CD4-positive, alpha-beta T cell (primary cell): ENCODE measurements at regions of chr1 and their contacts with region 1.

Region 1: DNA sequence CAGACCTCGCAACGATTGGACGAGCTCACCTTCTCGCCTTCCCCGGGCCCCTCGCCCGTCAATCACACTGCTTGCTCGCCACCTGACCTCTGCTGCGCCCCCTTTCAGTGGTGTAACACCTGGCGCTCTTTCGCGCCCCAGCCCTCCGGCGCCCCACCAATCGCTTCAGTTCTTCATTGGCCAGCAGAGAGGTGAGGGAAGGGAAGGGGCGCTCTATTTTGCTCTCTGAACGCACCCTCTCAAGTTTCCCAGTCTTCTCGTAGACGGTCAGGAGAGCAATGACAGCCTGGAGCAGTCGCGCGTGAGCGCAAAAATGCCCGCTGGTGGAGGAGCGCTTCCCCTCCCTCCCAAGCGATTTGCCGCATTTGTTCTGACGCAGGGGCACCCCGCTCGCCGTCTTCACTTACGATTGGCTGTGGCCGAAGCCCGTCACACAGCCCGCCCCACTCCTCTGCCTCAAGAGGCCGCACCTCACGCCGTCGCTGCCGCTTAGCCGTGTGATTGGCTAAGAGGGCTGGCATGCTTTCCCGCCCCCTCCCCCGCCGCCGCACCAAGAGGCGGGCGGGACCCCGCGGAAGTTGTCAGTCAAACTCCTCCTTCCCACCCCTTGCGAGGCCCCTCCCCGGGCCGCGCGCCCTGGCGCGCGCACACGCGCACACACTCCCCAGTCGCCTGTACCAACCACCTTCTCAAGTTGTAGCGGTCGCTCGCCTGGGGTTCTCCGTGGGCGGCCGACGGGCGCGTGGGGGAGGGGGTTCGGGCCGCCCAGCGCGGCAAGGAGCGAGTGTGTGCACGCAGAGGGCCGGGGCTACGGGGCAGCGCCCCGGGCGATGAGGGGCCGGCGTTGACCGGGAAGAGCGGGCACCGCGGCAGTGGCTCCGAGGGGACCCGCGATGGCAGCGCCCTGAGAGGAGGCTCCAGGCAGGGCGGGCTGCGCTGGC is at the start of gene PPP2R5A:
- DNase-seq: peak; percentile 96 to 100 (median 98)
- ATAC-seq: peak; percentile 86
- H3K4me3 ChIP-seq: peak within 1 kb of the TSS; percentile 99
- H3K4me3 Mint-ChIP-seq: peak within 1 kb of the TSS; percentile 100
- H3K27ac ChIP-seq: peak within 1 kb of the TSS; percentile 90 to 98
- H3K27ac Mint-ChIP-seq: peak within 1 kb of the TSS; percentile 92
- H3K4me1 ChIP-seq: peaks cover 22% of the 10 kb centered on the region
- H3K4me1 Mint-ChIP-seq: peaks cover 37% of the 10 kb centered on the region
- H3K27me3 ChIP-seq: no peaks in the 10 kb centered on the region
- H3K27me3 Mint-ChIP-seq: peaks cover 4% of the 10 kb centered on the region
- CTCF ChIP-seq: peak; percentile 50
- total RNA-seq, gene PPP2R5A: 44.3 to 46.2 TPM

Region 2: DNA sequence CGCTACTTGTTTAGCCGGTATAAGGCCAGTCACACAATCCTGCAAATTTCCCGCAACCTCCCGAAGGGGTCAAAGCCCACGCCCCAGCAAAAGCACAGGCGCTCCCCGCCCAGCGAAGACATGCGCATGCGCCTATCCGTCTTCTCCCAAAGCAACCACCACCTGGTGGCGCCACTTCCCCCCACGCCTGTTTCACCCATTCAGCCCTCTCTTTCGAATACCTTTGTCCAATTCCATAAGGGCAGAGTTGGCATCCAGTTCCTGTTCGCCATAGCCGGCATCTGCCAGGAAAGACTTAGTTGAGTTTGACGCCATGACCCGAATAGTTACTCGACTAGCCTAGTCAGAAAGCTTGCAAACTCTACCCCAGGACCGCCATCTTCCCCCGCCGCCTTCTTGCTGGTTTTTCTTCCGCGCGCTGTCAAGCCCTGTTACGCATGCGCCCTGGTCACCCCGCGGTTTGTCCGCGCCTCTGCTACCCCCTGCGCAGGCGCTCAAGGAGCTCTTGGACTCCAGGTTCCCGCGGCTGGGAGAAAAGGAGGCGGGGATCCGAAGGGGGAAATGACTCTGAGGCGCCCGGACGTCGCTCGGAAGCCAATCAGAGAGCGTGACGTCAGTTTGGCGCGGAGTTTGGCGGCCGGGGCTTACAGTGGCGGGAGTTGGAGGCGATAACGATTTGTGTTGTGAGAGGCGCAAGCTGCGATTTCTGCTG is 249.7 kb before region 1 on chr1 and contains the starts of genes DTL and INTS7:
- CTCF ChIA-PET with region 1: interaction called, 7 read pairs
- POLR2A ChIA-PET with region 1: interaction called, 50 read pairs
- intact Hi-C with region 1: loop called (anchors 1 to 5 kb)
- DNase-seq: peak; percentile 94 to 100 (median 98)
- ATAC-seq: peak; percentile 88
- H3K4me3 ChIP-seq: peak within 1 kb of the TSS; percentile 83
- H3K4me3 Mint-ChIP-seq: peak within 1 kb of the TSS; percentile 95
- H3K27ac ChIP-seq: peak within 1 kb of the TSS; percentile 55 to 77
- H3K27ac Mint-ChIP-seq: peak within 1 kb of the TSS; percentile 95
- H3K4me1 ChIP-seq: peaks cover 16% of the 10 kb centered on the region
- H3K4me1 Mint-ChIP-seq: peaks cover 66% of the 10 kb centered on the region
- H3K27me3 ChIP-seq: no peaks in the 10 kb centered on the region
- H3K27me3 Mint-ChIP-seq: no peaks in the 10 kb centered on the region
- CTCF ChIP-seq: peak; percentile 99
- total RNA-seq, gene DTL: 0.49 to 0.64 TPM
- total RNA-seq, gene INTS7: 2.9 to 3.2 TPM

Region 3: GRCh38 chr1:212162635-212163034 is 122.4 kb before region 1 on chr1:
- CTCF ChIA-PET with region 1: no interaction called
- POLR2A ChIA-PET with region 1: no interaction called
- intact Hi-C with region 1: loop called in 1 of 2 experiments (anchors 10 kb)
- DNase-seq: peak in 7 of 14 experiments; percentile 7 to 39 (median 35)
- ATAC-seq: no peak
- H3K4me3 ChIP-seq: no peak overlapping the region
- H3K4me3 Mint-ChIP-seq: peak overlapping the region; percentile 2
- H3K27ac ChIP-seq: no peak overlapping the region
- H3K27ac Mint-ChIP-seq: no peak overlapping the region
- H3K4me1 ChIP-seq: peaks cover 35% of the 10 kb centered on the region
- H3K4me1 Mint-ChIP-seq: peaks cover 27% of the 10 kb centered on the region
- H3K27me3 ChIP-seq: no peaks in the 10 kb centered on the region
- H3K27me3 Mint-ChIP-seq: no peaks in the 10 kb centered on the region
- CTCF ChIP-seq: no peak

Region 4: GRCh38 chr1:212328248-212328647 is 43.2 kb after region 1 on chr1:
- CTCF ChIA-PET with region 1: no interaction called
- POLR2A ChIA-PET with region 1: no interaction called
- intact Hi-C with region 1: loop called (anchors 5 kb)
- DNase-seq: no peak
- ATAC-seq: no peak
- H3K4me3 ChIP-seq: no peak overlapping the region
- H3K4me3 Mint-ChIP-seq: no peak overlapping the region
- H3K27ac ChIP-seq: no peak overlapping the region
- H3K27ac Mint-ChIP-seq: no peak overlapping the region
- H3K4me1 ChIP-seq: peaks cover 5% of the 10 kb centered on the region
- H3K4me1 Mint-ChIP-seq: peaks cover 54% of the 10 kb centered on the region
- H3K27me3 ChIP-seq: no peaks in the 10 kb centered on the region
- H3K27me3 Mint-ChIP-seq: no peaks in the 10 kb centered on the region
- CTCF ChIP-seq: no peak

Region 5: GRCh38 chr1:212432706-212433576 is 147.9 kb after region 1 on chr1 and contains the start of gene NENF:
- CTCF ChIA-PET with region 1: no interaction called
- POLR2A ChIA-PET with region 1: interaction called, 6 read pairs
- intact Hi-C with region 1: loop called in 1 of 2 experiments (anchors 5 kb)
- DNase-seq: peak; percentile 39 to 86 (median 70)
- ATAC-seq: peak; percentile 99
- H3K4me3 ChIP-seq: peak within 1 kb of the TSS; percentile 69
- H3K4me3 Mint-ChIP-seq: peak within 1 kb of the TSS; percentile 87
- H3K27ac ChIP-seq: no peak within 1 kb of the TSS
- H3K27ac Mint-ChIP-seq: peak within 1 kb of the TSS; percentile 65
- H3K4me1 ChIP-seq: peaks cover 20% of the 10 kb centered on the region
- H3K4me1 Mint-ChIP-seq: peaks cover 24% of the 10 kb centered on the region
- H3K27me3 ChIP-seq: no peaks in the 10 kb centered on the region
- H3K27me3 Mint-ChIP-seq: no peaks in the 10 kb centered on the region
- CTCF ChIP-seq: no peak
- total RNA-seq, gene NENF: 21.2 to 22.4 TPM

Region 6: GRCh38 chr1:212608209-212608955 is 323.4 kb after region 1 on chr1 and contains the start of gene ATF3:
- CTCF ChIA-PET with region 1: no interaction called
- POLR2A ChIA-PET with region 1: no interaction called
- intact Hi-C with region 1: loop called in 1 of 2 experiments (anchors 5 kb)
- DNase-seq: peak; percentile 49 to 92 (median 69)
- ATAC-seq: peak; percentile 69
- H3K4me3 ChIP-seq: peak within 1 kb of the TSS; percentile 82
- H3K4me3 Mint-ChIP-seq: peak within 1 kb of the TSS; percentile 97
- H3K27ac ChIP-seq: no peak within 1 kb of the TSS
- H3K27ac Mint-ChIP-seq: peak within 1 kb of the TSS; percentile 78
- H3K4me1 ChIP-seq: peaks cover 38% of the 10 kb centered on the region
- H3K4me1 Mint-ChIP-seq: peaks cover 36% of the 10 kb centered on the region
- H3K27me3 ChIP-seq: peaks cover 59% of the 10 kb centered on the region in 2 experiments
- H3K27me3 Mint-ChIP-seq: peaks cover 86% of the 10 kb centered on the region
- CTCF ChIP-seq: no peak
- total RNA-seq, gene ATF3: 10.4 to 12.7 TPM